ENCODE measurements at regions of chr3 and their contacts with region 1.

Region 1: DNA sequence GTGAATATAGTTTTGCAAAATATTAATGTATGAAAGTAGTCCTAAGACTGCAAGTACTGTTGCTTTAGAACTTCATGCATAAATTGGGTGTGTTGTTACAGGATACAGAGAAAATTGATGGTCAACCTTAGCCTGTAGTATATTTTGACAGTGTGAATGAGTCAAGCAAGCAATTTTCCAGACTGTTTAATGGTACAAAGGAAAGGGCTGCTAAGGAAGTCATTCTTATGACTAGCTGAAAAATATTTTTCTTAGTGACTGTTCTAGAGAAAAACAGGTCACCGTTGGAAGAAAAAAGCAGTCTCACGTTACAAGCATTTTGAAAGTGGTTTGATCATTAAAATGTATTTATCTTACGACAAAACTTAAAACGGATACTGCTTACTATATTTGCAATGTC is 49.2 kb downstream of the MBNL1 start:
- DNase-seq: no peak
- ATAC-seq: no peak
- H3K4me3 Mint-ChIP-seq: no peak overlapping the region
- H3K27ac Mint-ChIP-seq: no peak overlapping the region
- H3K4me1 Mint-ChIP-seq: peaks cover 80% of the 10 kb centered on the region
- H3K27me3 Mint-ChIP-seq: no peaks in the 10 kb centered on the region
- CTCF ChIP-seq: no peak

Region 2: GRCh38 chr3:151989621-151990020 is 328.3 kb before region 1 on chr3:
- CTCF ChIA-PET with region 1: no interaction called
- POLR2A ChIA-PET with region 1: no interaction called
- intact Hi-C with region 1: no loop called
- DNase-seq: no peak
- ATAC-seq: no peak
- H3K4me3 Mint-ChIP-seq: no peak overlapping the region
- H3K27ac Mint-ChIP-seq: no peak overlapping the region
- H3K4me1 Mint-ChIP-seq: peaks cover 11% of the 10 kb centered on the region
- H3K27me3 Mint-ChIP-seq: peaks cover 4% of the 10 kb centered on the region
- CTCF ChIP-seq: no peak

Region 3: GRCh38 chr3:152328841-152329240 is 10.9 kb after region 1 on chr3:
- CTCF ChIA-PET with region 1: no interaction called
- POLR2A ChIA-PET with region 1: interaction called, 3 read pairs
- intact Hi-C with region 1: loop called (anchors 1 kb)
- DNase-seq: no peak
- ATAC-seq: no peak
- H3K4me3 Mint-ChIP-seq: peak overlapping the region; percentile 11
- H3K27ac Mint-ChIP-seq: peak overlapping the region; percentile 47
- H3K4me1 Mint-ChIP-seq: peaks cover 69% of the 10 kb centered on the region
- H3K27me3 Mint-ChIP-seq: no peaks in the 10 kb centered on the region
- CTCF ChIP-seq: no peak